Natural killer cell (primary cell): ENCODE measurements at regions of chr10 and their contacts with region 1.

Region 1: DNA sequence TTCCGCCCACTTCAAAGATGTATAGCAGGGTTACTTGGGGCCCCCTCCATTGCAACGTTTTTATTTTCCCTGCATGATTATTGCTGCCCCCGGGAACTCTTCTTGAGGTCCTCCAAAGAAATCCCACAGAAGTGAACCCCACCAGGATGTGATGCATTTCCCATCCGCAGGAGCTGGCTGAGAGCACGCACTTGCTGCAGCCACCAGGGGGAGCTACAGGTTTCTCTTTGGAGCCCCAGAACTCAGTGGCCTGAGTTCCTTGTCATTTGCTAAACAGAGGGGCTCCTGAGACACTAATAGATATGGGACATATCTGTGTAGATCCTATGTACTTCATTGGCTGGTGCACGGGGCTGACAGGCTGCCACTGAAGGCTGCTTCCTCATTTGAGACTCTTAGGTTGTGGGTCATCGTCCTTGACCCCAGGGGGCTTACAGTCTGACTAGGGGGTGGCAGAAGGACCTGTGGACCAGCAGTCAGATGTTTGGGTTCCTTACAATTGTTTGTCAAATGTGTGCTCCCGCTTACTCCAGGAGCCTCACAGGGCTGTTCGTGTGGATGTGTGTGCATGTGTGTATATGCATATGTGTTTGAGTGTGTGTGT is 52.3 kb upstream of the ENO4 start:
- DNase-seq: peak; percentile 30 to 80
- ATAC-seq: peak in 2 of 3 donors; percentile 38 to 71
- H3K4me3 ChIP-seq: no peak overlapping the region
- H3K4me3 Mint-ChIP-seq: no peak overlapping the region
- H3K27ac ChIP-seq: no peak overlapping the region
- H3K27ac Mint-ChIP-seq: no peak overlapping the region
- H3K4me1 ChIP-seq: no peaks in the 10 kb centered on the region
- H3K4me1 Mint-ChIP-seq: peaks cover 0 to 6% of the 10 kb centered on the region in 2 donors
- H3K27me3 ChIP-seq: no peaks in the 10 kb centered on the region
- H3K27me3 Mint-ChIP-seq: peaks cover 12 to 18% of the 10 kb centered on the region in 2 donors
- CTCF ChIP-seq: peak; percentile 69

Region 2: DNA sequence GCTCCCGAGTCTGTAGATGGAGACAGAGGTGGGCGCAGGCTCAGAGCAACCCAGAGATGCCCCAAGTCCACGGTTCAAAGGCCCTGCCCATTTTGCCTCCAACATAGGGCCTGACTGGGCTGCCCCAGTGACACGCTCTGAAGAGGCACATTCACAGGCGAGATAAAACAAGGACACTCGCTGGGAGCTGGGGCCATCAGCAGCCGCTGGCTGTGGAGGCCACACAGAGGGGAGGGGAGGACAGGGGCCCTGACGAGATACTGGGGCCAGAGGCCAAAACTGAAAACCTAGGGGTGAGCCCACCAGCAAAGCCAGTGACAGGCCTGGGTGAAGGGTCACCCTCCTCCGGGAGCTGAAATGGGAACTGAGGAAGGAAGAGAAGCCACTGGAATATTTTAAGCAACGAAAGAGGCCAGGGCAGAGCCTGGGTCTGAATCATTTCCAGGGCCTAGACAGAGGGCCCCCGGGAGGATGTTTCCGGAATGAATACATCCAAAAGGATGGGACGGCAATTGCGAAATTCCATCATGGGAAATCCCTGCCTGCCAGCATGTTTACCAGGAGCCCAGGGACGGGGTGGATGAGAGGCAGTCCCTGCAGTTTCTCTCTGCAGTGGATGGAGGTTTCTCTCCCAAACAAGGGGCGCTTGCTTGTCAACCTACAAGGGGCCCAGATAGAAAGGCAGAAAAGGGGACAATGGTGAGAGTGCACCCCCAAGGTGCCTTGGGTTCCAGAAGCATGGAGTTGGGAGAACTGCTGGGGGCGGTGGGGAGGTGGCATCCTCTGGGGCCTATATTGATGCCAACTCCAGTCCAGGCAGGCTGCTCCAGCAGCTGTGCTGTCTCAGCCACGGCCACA is 25.7 kb before region 1 on chr10:
- intact Hi-C with region 1: no loop called
- DNase-seq: no peak
- ATAC-seq: no peak
- H3K4me3 ChIP-seq: no peak overlapping the region
- H3K4me3 Mint-ChIP-seq: no peak overlapping the region
- H3K27ac ChIP-seq: no peak overlapping the region
- H3K27ac Mint-ChIP-seq: no peak overlapping the region
- H3K4me1 ChIP-seq: no peaks in the 10 kb centered on the region
- H3K4me1 Mint-ChIP-seq: no peaks in the 10 kb centered on the region
- H3K27me3 ChIP-seq: no peaks in the 10 kb centered on the region
- H3K27me3 Mint-ChIP-seq: peaks cover 0 to 3% of the 10 kb centered on the region in 2 donors
- CTCF ChIP-seq: no peak

Region 3: DNA sequence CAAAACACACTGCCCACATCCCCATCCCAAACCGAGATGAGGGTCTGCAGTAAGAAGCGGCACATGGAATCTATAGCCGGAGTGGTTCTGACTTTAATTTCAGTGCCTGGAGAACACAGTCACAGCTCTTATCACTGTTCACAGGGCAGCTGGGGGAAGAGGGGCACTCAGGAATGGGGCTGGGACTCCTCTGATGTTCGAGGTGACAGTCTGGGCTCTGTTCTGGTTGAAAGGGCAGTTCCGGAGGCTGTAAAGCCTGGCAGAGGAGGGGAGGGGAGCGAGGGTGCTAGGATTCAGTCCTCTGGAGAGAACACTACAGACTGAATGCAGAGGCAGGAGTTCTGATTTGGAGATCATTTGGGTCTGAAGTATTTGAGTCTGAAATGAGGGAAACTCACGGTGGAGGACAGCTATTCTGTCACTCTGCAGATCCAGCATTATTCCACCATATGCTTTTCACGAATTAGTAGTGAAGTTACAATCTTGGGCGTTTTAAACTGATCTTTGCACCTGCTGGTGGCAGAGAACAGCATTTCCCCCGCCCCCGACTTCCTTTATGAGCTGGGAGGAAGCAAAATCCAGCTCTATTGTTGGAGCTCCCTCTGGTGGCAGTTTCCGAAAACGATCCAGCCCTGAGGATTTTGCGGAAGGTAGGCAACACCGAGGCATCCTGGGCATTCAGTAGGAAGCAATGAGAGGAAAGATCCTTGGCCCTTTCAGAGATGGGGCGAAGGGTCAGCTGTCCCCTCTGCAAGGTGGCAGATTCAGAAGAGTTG is 377.6 kb after region 1 on chr10:
- intact Hi-C with region 1: loop called (anchors 1 kb)
- DNase-seq: peak; percentile 44 to 90
- ATAC-seq: peak; percentile 77 to 85 (median 82)
- H3K4me3 ChIP-seq: peak overlapping the region; percentile 35
- H3K4me3 Mint-ChIP-seq: peak overlapping the region; percentile 90
- H3K27ac ChIP-seq: no peak overlapping the region
- H3K27ac Mint-ChIP-seq: peak overlapping the region in 1 of 2 donors; percentile 56
- H3K4me1 ChIP-seq: peaks cover 18% of the 10 kb centered on the region
- H3K4me1 Mint-ChIP-seq: peaks cover 19% of the 10 kb centered on the region in 2 donors
- H3K27me3 ChIP-seq: peaks cover 22% of the 10 kb centered on the region
- H3K27me3 Mint-ChIP-seq: peaks cover 27 to 32% of the 10 kb centered on the region in 2 donors
- CTCF ChIP-seq: peak; percentile 69